ENCODE measurements at regions of chr5 and their contacts with region 1.

Region 1: GRCh38 chr5:56200856-56201666 is 32.1 kb downstream of the ANKRD55 start:
- DNase-seq: peak; percentile 28 to 73 (median 59)
- ATAC-seq: peak; percentile 93
- H3K4me3 ChIP-seq: no peak overlapping the region
- H3K4me3 Mint-ChIP-seq: peak overlapping the region in 3 of 10 donors; percentile 2 to 27 (median 6)
- H3K27ac ChIP-seq: no peak overlapping the region
- H3K27ac Mint-ChIP-seq: peak overlapping the region in 7 of 9 donors; percentile 9 to 77 (median 63)
- H3K4me1 ChIP-seq: peaks cover 0 to 9% of the 10 kb centered on the region in 2 donors
- H3K4me1 Mint-ChIP-seq: peaks cover 17 to 34% (median 29%) of the 10 kb centered on the region in 7 donors
- H3K27me3 ChIP-seq: no peaks in the 10 kb centered on the region
- H3K27me3 Mint-ChIP-seq: no peaks in the 10 kb centered on the region

Region 2: GRCh38 chr5:55344392-55344992 is 856.6 kb before region 1 on chr5:
- CTCF ChIA-PET with region 1: no interaction called
- POLR2A ChIA-PET with region 1: no interaction called
- intact Hi-C with region 1: loop called in 1 of 2 experiments (anchors 10 kb)
- DNase-seq: peak; percentile 18 to 60 (median 47)
- ATAC-seq: peak; percentile 79
- H3K4me3 ChIP-seq: no peak overlapping the region
- H3K4me3 Mint-ChIP-seq: no peak overlapping the region
- H3K27ac ChIP-seq: no peak overlapping the region
- H3K27ac Mint-ChIP-seq: no peak overlapping the region
- H3K4me1 ChIP-seq: no peaks in the 10 kb centered on the region
- H3K4me1 Mint-ChIP-seq: peaks cover 2 to 11% (median 3%) of the 10 kb centered on the region in 7 donors
- H3K27me3 ChIP-seq: no peaks in the 10 kb centered on the region
- H3K27me3 Mint-ChIP-seq: no peaks in the 10 kb centered on the region

Region 3: DNA sequence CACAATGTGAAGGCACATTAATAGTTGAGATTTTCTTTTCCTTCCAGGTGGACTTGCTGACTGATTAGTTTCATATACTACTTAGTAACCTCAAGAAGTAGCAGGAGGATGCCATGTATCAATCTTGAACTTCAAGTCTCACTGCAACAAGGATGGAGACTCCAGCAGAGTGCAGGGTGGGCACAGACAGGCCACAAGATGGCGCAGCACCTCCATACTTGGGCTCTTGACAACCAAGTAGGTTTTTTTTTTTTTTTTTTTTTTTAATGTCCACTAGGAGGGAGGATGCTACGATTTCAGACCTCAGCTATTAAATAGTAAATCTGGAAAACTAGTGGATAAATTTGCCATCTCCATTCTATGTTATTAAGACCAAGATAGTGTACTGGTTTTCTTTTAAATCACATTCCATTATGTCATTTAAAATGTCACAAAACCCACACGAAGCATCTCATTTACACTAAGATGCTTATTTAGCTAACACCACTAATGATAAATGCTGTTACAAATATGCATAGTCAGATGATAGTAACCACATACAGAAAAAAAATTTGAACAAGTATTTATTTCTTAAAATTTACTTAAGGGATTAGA is 264.9 kb before region 1 on chr5:
- CTCF ChIA-PET with region 1: interaction called, 56 read pairs
- POLR2A ChIA-PET with region 1: interaction called, 3 read pairs
- intact Hi-C with region 1: loop called (anchors 1 kb)
- DNase-seq: peak; percentile 44 to 73 (median 66)
- ATAC-seq: peak; percentile 91
- H3K4me3 ChIP-seq: no peak overlapping the region
- H3K4me3 Mint-ChIP-seq: no peak overlapping the region
- H3K27ac ChIP-seq: no peak overlapping the region
- H3K27ac Mint-ChIP-seq: peak overlapping the region in 6 of 9 donors; percentile 11 to 84 (median 38)
- H3K4me1 ChIP-seq: no peaks in the 10 kb centered on the region
- H3K4me1 Mint-ChIP-seq: peaks cover 0 to 35% (median 14%) of the 10 kb centered on the region in 7 donors
- H3K27me3 ChIP-seq: no peaks in the 10 kb centered on the region
- H3K27me3 Mint-ChIP-seq: no peaks in the 10 kb centered on the region

Region 4: DNA sequence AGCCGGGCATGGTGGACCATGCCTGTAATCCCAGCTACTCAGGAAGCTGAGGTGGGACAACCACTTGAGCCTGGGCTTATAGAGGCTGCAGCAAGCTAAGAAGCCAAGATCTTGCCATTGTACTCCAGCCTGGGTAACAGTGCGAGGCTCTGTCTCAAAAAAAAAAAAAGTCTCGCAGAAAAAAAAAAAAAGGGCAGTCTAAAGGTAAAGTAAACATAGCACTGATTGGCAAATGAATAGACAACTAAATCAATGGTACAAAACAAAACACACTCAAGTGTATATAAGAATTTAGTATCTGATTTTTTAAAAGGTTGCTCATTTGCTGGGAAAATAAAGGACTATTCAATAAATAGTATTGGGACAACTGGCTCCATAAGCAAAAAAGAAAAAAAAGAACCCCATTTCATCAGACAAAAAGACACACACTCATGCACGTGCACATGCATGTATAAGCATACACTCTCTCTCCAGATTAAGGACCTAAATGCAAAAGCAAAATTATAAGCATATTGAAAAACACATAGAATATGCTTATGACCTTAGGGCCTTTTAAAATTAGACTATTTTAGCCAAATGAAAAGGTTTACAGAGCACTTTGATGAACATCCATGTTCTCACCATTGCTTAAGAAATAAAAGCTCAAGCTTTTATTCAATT is 212.0 kb before region 1 on chr5:
- CTCF ChIA-PET with region 1: interaction called, 11 read pairs
- POLR2A ChIA-PET with region 1: interaction called, 21 read pairs
- intact Hi-C with region 1: no loop called
- DNase-seq: peak in 2 of 9 donors; percentile 29 to 41
- ATAC-seq: peak; percentile 24
- H3K4me3 ChIP-seq: peak overlapping the region; percentile 10
- H3K4me3 Mint-ChIP-seq: peak overlapping the region; percentile 67 to 99 (median 96)
- H3K27ac ChIP-seq: peak overlapping the region; percentile 64
- H3K27ac Mint-ChIP-seq: peak overlapping the region in 8 of 9 donors; percentile 48 to 100 (median 96)
- H3K4me1 ChIP-seq: peaks cover 12 to 32% of the 10 kb centered on the region in 2 donors
- H3K4me1 Mint-ChIP-seq: peaks cover 47 to 86% (median 75%) of the 10 kb centered on the region in 7 donors
- H3K27me3 ChIP-seq: no peaks in the 10 kb centered on the region
- H3K27me3 Mint-ChIP-seq: no peaks in the 10 kb centered on the region

Region 5: GRCh38 chr5:56070851-56071465 is 130.1 kb before region 1 on chr5:
- CTCF ChIA-PET with region 1: interaction called, 8 read pairs
- POLR2A ChIA-PET with region 1: no interaction called
- intact Hi-C with region 1: loop called in 1 of 2 experiments (anchors 2 kb)
- DNase-seq: peak in 7 of 9 donors; percentile 46 to 79 (median 69)
- ATAC-seq: peak; percentile 91
- H3K4me3 ChIP-seq: peak overlapping the region; percentile 31
- H3K4me3 Mint-ChIP-seq: peak overlapping the region; percentile 54 to 91 (median 78)
- H3K27ac ChIP-seq: peak overlapping the region; percentile 77
- H3K27ac Mint-ChIP-seq: peak overlapping the region; percentile 65 to 99 (median 91)
- H3K4me1 ChIP-seq: peaks cover 7 to 72% of the 10 kb centered on the region in 2 donors
- H3K4me1 Mint-ChIP-seq: peaks cover 41 to 95% (median 80%) of the 10 kb centered on the region in 7 donors
- H3K27me3 ChIP-seq: no peaks in the 10 kb centered on the region
- H3K27me3 Mint-ChIP-seq: peaks cover 0 to 3% (median 0%) of the 10 kb centered on the region in 5 donors

Region 6: DNA sequence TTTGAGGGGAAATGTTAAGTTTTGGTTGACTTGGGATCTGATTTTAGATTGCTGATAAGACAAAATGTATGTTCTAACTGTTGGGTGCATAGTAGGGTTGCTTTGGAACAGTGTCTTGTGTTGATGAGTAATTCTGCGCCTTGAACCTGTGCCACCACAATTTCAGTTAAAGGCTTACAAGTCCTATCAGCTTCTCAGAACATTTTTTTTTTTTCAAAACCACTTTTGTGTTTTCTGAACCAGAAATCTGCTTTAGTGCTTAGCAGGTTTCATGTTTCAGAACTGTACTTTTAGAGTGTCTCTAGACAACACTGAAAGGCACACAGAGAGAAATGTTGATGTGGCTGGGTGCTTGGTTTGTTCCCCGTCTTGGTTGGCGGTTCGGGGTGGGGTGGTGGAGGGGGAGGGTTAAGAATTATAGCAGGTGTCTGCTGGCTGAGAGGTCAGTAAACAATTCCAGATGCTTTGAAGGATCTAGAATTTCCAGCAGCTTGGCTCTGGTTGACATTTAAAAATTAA is 52.5 kb before region 1 on chr5:
- CTCF ChIA-PET with region 1: interaction called, 7 read pairs
- POLR2A ChIA-PET with region 1: interaction called, 7 read pairs
- intact Hi-C with region 1: loop called in 1 of 2 experiments (anchors 1 kb)
- DNase-seq: peak in 8 of 9 donors; percentile 52 to 84 (median 70)
- ATAC-seq: peak; percentile 87
- H3K4me3 ChIP-seq: peak overlapping the region; percentile 18
- H3K4me3 Mint-ChIP-seq: peak overlapping the region; percentile 45 to 74 (median 62)
- H3K27ac ChIP-seq: peak overlapping the region; percentile 61
- H3K27ac Mint-ChIP-seq: peak overlapping the region; percentile 87 to 97 (median 94)
- H3K4me1 ChIP-seq: peaks cover 0 to 76% of the 10 kb centered on the region in 2 donors
- H3K4me1 Mint-ChIP-seq: peaks cover 39 to 76% (median 70%) of the 10 kb centered on the region in 7 donors
- H3K27me3 ChIP-seq: no peaks in the 10 kb centered on the region
- H3K27me3 Mint-ChIP-seq: peaks cover 0 to 2% (median 0%) of the 10 kb centered on the region in 5 donors

Region 7: GRCh38 chr5:56838409-56839039 is 637.5 kb after region 1 on chr5:
- CTCF ChIA-PET with region 1: no interaction called
- POLR2A ChIA-PET with region 1: no interaction called
- intact Hi-C with region 1: loop called in 1 of 2 experiments (anchors 5 kb)
- DNase-seq: peak in 7 of 9 donors; percentile 33 to 61 (median 48)
- ATAC-seq: peak; percentile 75
- H3K4me3 ChIP-seq: no peak overlapping the region
- H3K4me3 Mint-ChIP-seq: peak overlapping the region; percentile 19 to 79 (median 57)
- H3K27ac ChIP-seq: peak overlapping the region; percentile 42
- H3K27ac Mint-ChIP-seq: peak overlapping the region; percentile 8 to 95 (median 78)
- H3K4me1 ChIP-seq: peaks cover 8 to 87% of the 10 kb centered on the region in 2 donors
- H3K4me1 Mint-ChIP-seq: peaks cover 63 to 95% (median 90%) of the 10 kb centered on the region in 7 donors
- H3K27me3 ChIP-seq: no peaks in the 10 kb centered on the region
- H3K27me3 Mint-ChIP-seq: no peaks in the 10 kb centered on the region

Measured in naive thymus-derived CD4-positive, alpha-beta T cell (primary cell).